ENCODE measurements at regions of chr2 and their contacts with region 1.

Region 1: GRCh38 chr2:130342533-130343275 is at the start of gene IMP4:
- DNase-seq: peak; percentile 98

Region 2: GRCh38 chr2:130135692-130136541 is 206.8 kb before region 1 on chr2:
- in situ Hi-C with region 1: no loop called
- DNase-seq: no peak

Region 3: DNA sequence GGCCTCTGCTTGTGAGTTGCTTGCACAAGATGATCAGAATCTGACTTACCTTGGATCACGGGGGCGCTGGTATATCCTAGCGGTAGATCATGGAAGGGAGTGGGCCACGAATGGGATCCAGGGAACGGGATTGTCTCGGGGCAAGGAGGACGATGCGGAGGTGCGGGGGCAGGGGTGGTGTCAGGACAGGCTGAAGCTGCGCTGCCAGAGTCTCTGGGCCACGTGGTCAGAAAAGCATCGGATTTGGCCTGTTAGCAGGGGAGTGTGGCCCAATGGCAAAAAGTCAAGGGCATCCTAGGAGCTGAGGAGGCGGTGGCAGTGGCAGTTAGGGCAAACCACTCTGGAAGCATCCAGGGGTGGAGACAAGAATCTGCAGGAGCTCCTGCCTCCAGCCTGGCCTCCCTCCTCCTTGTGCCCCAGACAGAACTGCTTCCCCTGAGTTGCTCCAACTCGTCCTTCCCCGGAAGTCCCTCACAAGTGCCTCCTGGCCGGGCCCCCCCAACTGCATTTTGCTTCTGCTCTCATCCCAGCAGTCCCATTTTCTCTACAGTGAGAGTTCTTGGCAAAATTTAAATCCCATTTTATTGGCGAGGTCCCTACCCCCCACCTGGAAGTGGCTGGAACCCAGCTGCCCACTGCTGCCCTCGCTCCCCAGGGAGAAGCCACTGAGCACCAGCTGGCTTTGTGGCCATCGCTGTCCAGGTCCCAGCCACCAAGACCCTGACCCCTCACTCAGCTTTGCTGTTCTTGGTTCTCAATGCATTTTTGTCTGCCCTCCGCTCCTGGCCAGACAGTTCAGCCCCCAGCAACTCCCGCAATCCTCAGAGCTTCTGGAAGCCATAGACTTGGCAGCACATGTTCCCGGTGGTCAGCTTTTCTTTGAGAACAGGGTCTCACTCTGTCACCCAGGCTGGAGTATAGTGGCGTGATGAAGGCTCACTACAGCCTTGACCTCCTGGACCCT is 192.2 kb before region 1 on chr2:
- in situ Hi-C with region 1: loop called (anchors 25 kb)
- DNase-seq: no peak

Region 4: GRCh38 chr2:130824492-130825061 is 481.9 kb after region 1 on chr2:
- in situ Hi-C with region 1: no loop called
- DNase-seq: peak; percentile 40